GM13977 (cell line): ENCODE measurements at regions of chr5 and their contacts with region 1.

Region 1: GRCh38 chr5:80487829-80488721 is at the start of gene FAM151B:
- DNase-seq: peak; percentile 79
- CTCF ChIP-seq: peak; percentile 13

Region 2: DNA sequence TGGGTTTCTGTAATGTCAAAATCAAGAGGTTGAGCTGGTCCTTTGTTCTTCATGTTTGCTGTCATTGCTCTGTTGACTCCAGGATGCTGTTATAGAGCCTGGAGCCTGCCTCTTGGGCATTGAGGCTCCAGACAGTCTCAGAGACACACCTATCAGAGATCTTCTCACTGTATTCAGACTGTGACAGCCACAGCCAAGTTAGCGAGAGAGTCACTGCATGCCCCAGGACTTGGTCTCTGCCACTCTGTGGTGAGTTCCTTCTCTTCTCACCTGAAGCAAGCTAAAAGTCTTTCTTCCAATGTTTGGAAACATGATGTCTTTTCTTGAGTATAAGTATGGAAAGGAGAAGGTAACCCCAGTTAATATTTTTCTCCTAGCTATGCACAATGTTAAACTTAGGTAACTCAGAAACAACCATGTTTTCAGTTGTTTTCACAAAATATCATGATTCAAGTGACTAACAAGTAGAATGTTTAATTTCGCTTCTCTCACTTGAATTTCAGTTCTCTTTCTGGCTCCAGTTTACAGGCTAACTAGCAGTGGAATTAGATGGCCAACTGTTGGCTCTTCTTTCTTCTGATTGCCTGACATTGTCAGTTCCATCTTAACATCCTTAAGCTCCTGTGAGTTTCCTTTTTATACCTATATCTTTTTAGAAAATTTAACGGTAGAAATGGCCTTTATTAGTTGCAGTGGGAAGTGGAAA is 100.9 kb before region 1 on chr5:
- in situ Hi-C with region 1: no loop called
- DNase-seq: no peak
- CTCF ChIP-seq: no peak

Region 3: GRCh38 chr5:80672140-80672736 is 184.2 kb after region 1 on chr5:
- in situ Hi-C with region 1: loop called (anchors 10 kb)
- DNase-seq: peak; percentile 64
- CTCF ChIP-seq: peak; percentile 94